A673 (cell line): ENCODE measurements at regions of chr18 and their contacts with region 1.

Region 1: GRCh38 chr18:48030616-48031480 is 100.4 kb upstream of the SMAD2 start:
- DNase-seq: peak; percentile 57
- H3K4me3 ChIP-seq: no peak overlapping the region
- H3K27ac ChIP-seq: no peak overlapping the region
- H3K4me1 ChIP-seq: no peaks in the 10 kb centered on the region
- H3K27me3 ChIP-seq: no peaks in the 10 kb centered on the region
- CTCF ChIP-seq: peak; percentile 75

Region 2: DNA sequence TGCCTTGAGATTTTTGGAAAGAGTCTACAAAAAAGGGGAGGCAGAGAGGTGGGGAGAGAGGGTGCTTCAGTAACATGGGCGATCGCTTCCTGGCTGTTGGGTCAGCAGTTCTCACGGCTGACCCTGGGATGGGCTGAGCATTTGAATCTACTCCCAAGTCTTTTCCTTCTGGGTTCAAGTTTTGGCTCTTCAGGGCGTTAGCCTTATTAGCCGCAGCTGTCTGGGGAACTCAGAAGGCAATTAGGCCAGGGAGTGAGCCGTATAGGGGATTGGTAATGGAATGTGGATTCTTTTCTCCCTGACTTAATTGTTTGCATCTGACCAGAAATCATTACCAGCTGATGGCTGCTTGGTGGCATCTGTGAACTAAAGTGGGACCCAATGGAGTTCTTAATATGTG is 528.9 kb before region 1 on chr18:
- CTCF ChIA-PET with region 1: no interaction called
- POLR2A ChIA-PET with region 1: no interaction called
- intact Hi-C with region 1: no loop called
- DNase-seq: no peak
- H3K4me3 ChIP-seq: no peak overlapping the region
- H3K27ac ChIP-seq: no peak overlapping the region
- H3K4me1 ChIP-seq: no peaks in the 10 kb centered on the region
- H3K27me3 ChIP-seq: peaks cover 33% of the 10 kb centered on the region
- CTCF ChIP-seq: no peak

Region 3: DNA sequence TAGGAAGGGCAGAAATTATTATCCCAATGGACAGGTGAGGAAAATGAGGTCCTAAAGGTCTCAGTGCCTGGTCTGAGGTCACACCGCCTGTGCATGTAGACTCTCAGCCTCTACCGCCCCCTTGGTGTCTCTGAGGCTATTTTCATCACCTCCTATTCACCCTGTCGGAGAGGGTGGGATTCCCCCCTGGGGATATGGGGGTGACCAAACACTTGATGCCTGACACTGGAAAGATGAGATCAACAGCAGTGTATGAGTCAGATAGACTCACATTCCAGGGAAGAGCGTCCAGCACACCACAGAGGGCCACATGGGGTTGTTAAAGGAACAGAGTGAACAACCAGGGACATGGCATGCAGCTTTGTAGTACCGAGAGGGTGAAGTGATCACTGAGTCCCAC is 300.1 kb before region 1 on chr18:
- CTCF ChIA-PET with region 1: no interaction called
- POLR2A ChIA-PET with region 1: no interaction called
- intact Hi-C with region 1: no loop called
- DNase-seq: no peak
- H3K4me3 ChIP-seq: no peak overlapping the region
- H3K27ac ChIP-seq: no peak overlapping the region
- H3K4me1 ChIP-seq: no peaks in the 10 kb centered on the region
- H3K27me3 ChIP-seq: peaks cover 56% of the 10 kb centered on the region
- CTCF ChIP-seq: no peak

Region 4: GRCh38 chr18:48446582-48447225 is 415.9 kb after region 1 on chr18:
- CTCF ChIA-PET with region 1: no interaction called
- POLR2A ChIA-PET with region 1: no interaction called
- intact Hi-C with region 1: loop called (anchors 2 kb)
- DNase-seq: peak; percentile 75
- H3K4me3 ChIP-seq: no peak overlapping the region
- H3K27ac ChIP-seq: no peak overlapping the region
- H3K4me1 ChIP-seq: no peaks in the 10 kb centered on the region
- H3K27me3 ChIP-seq: peaks cover 12% of the 10 kb centered on the region
- CTCF ChIP-seq: peak; percentile 90

Region 5: DNA sequence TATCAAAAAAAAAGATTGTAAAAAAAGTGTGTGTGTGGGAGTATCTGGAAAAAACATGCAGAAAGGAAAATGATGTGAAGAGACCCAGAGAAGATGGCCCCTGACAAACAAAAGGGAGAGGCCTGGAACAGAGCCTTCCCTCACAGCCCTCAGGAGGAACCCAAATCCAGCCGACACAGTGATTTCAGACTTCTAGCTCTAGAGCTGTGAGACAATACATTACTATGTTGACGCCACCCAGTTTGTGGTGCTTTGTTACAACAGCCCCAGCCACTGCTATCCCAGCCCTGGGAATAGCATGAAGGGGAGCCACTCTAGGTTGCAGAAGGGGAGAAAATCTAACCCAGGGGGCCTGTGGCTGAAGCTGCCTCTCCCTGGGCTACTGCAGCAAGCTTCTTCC is 437.3 kb after region 1 on chr18:
- CTCF ChIA-PET with region 1: no interaction called
- POLR2A ChIA-PET with region 1: no interaction called
- intact Hi-C with region 1: loop called (anchors 5 kb)
- DNase-seq: no peak
- H3K4me3 ChIP-seq: no peak overlapping the region
- H3K27ac ChIP-seq: no peak overlapping the region
- H3K4me1 ChIP-seq: no peaks in the 10 kb centered on the region
- H3K27me3 ChIP-seq: peaks cover 3% of the 10 kb centered on the region
- CTCF ChIP-seq: no peak